Activated CD8-positive, alpha-beta T cell treated with anti-CD3 and anti-CD28 coated beads for 36 hours (primary cell): ENCODE measurements at regions of chr3 and their contacts with region 1.

Region 1: GRCh38 chr3:12891985-12892839 is 50.8 kb upstream of the RPL32 start:
- DNase-seq: peak; percentile 67
- ATAC-seq: peak; percentile 71
- H3K4me3 Mint-ChIP-seq: no peak overlapping the region
- H3K27ac Mint-ChIP-seq: no peak overlapping the region
- H3K4me1 Mint-ChIP-seq: peaks cover 10% of the 10 kb centered on the region
- H3K27me3 Mint-ChIP-seq: peaks cover 10% of the 10 kb centered on the region
- CTCF ChIP-seq: peak; percentile 97

Region 2: GRCh38 chr3:12782172-12782815 is 109.9 kb before region 1 on chr3:
- CTCF ChIA-PET with region 1: interaction called, 12 read pairs
- POLR2A ChIA-PET with region 1: no interaction called
- intact Hi-C with region 1: loop called (anchors 5 kb)
- DNase-seq: peak; percentile 34
- ATAC-seq: no peak
- H3K4me3 Mint-ChIP-seq: no peak overlapping the region
- H3K27ac Mint-ChIP-seq: no peak overlapping the region
- H3K4me1 Mint-ChIP-seq: no peaks in the 10 kb centered on the region
- H3K27me3 Mint-ChIP-seq: peaks cover 10% of the 10 kb centered on the region
- CTCF ChIP-seq: no peak

Region 3: GRCh38 chr3:12856626-12857025 is 35.6 kb before region 1 on chr3:
- CTCF ChIA-PET with region 1: interaction called, 11 read pairs
- POLR2A ChIA-PET with region 1: interaction called, 3 read pairs
- intact Hi-C with region 1: no loop called
- DNase-seq: no peak
- ATAC-seq: no peak
- H3K4me3 Mint-ChIP-seq: no peak overlapping the region
- H3K27ac Mint-ChIP-seq: no peak overlapping the region
- H3K4me1 Mint-ChIP-seq: no peaks in the 10 kb centered on the region
- H3K27me3 Mint-ChIP-seq: peaks cover 2% of the 10 kb centered on the region
- CTCF ChIP-seq: no peak

Region 4: DNA sequence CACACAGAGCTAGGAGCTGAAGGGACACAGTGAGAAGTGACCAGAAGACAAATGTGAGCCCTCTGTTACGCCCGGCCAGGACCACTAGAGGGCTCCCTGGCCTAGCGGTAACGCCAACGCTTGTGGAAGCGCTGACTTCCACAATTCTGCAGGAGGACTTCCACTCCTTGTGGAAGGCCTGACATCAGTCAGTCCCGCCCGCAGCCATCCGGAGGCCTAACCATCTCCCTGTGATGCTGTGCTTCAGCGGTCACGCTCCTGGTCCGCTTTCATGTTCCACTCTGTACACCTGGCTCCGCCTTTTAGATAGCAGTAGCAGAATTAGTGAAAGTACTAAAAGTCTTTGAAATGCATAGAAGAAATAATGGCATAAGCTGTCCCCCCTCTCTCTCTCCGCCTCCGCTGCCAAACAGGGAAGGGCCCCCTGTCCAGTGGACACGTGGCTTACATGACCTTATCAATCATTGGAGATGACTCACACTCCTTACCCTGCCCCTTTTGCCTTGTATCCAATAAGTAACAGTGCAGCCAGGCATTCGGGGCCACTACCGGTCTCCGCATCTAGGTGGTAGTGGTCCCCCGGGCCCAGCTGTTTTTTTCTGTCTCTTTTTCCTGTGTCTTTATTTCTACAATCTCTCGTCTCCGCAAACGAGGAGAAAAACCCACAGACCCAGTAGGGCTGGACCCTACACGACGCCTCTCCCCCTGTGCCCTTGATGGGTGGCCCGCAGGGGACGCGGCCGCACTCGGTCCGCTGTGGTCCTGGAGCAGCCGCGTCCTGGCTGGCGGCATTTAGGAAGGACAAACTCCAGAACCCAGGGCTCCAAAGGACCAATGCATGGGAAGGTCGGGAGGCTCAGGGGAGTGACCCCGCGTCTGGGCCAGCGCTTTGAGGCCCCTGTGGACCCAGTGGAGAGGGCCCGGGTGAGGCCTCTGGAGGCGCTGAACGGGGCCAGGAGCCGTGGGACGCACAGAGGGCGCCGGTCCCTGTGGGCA is 23.9 kb before region 1 on chr3:
- CTCF ChIA-PET with region 1: interaction called, 36 read pairs
- POLR2A ChIA-PET with region 1: no interaction called
- intact Hi-C with region 1: no loop called
- DNase-seq: peak; percentile 80
- ATAC-seq: peak; percentile 81
- H3K4me3 Mint-ChIP-seq: peak overlapping the region; percentile 67
- H3K27ac Mint-ChIP-seq: no peak overlapping the region
- H3K4me1 Mint-ChIP-seq: peaks cover 6% of the 10 kb centered on the region
- H3K27me3 Mint-ChIP-seq: peaks cover 7% of the 10 kb centered on the region
- CTCF ChIP-seq: peak; percentile 92

Region 5: DNA sequence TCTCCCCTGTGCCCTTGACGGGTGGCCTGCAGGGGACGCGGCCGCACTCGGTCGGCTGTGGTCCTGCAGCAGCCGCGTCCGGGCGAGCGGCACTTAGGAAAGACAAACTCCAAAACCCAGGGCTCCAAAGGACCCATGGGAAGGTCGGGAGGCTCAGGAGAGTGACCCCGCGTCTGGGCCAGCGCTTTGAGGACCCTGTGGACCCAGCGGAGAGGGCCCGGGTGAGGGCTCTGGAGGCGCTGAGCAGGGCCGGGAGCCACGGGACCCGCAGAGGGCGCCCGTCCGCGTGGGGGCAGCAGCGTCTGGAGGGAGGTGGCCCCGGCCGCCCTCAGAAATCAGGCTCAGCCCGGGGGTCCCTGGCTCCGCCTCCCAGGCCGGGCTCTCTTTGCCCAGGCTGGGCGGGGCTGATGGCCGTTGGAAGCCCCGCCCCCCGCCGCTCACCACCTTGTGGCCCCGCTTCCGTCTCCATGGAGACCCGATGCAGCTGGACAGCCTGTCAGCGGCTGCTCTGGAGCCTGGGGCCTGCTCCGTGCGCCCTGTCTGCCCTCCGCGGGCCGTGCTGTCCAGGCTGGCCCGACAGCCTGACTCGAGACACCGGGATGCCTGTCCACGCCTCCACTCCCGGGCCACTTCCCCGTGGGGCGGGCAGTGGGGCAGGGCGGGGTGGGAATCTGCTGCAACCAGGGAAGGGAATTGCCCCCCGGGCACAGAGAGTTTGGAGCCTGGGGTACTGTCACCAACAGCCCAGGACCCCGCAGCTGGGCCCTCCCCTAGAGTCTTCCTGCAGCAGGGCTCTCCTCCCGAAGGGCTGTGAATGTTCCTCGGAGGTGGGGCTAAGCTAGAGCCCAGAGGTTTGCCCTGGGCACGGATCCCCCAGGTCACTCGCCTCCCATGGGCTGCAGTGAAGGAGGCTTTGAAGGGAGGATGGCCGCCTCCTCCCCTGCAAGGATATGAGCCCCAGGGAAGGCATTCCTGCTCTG is 16.1 kb before region 1 on chr3:
- CTCF ChIA-PET with region 1: interaction called, 32 read pairs
- POLR2A ChIA-PET with region 1: no interaction called
- intact Hi-C with region 1: no loop called
- DNase-seq: peak; percentile 24
- ATAC-seq: peak; percentile 81
- H3K4me3 Mint-ChIP-seq: no peak overlapping the region
- H3K27ac Mint-ChIP-seq: no peak overlapping the region
- H3K4me1 Mint-ChIP-seq: no peaks in the 10 kb centered on the region
- H3K27me3 Mint-ChIP-seq: peaks cover 9% of the 10 kb centered on the region
- CTCF ChIP-seq: peak; percentile 41